ENCODE measurements at regions of chr20 and their contacts with region 1.

Region 1: DNA sequence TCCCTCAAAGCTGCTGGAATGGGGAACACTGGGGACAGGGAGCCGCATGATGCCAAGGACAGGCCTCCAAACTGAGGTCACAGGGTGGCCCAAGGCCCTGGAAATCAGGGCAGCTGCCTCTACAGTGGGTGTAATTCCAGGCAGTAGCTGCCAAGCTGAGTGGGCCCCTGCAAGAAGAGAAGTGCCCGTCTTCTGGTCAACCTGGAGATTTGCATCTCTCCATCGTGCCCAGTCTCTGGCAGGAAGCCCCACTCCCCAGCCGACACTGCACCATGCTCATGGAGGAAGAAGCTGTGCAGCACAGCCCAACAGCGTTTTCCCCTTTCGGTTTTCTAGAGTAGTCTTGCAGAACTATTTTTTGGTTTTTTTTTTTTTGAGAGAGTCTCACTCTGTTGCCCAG is 2.2 kb upstream of the FAM209A start:
- DNase-seq: no peak
- H3K4me3 ChIP-seq: no peak overlapping the region
- H3K27ac ChIP-seq: no peak overlapping the region
- H3K4me1 ChIP-seq: no peaks in the 10 kb centered on the region
- H3K27me3 ChIP-seq: no peaks in the 10 kb centered on the region
- CTCF ChIP-seq: no peak

Region 2: GRCh38 chr20:56428881-56429280 is 93.4 kb before region 1 on chr20:
- CTCF ChIA-PET with region 1: interaction called, 14 read pairs
- dilution Hi-C with region 1: no loop called
- in situ Hi-C with region 1: no loop called
- intact Hi-C with region 1: no loop called
- DNase-seq: no peak
- H3K4me3 ChIP-seq: no peak overlapping the region
- H3K27ac ChIP-seq: no peak overlapping the region
- H3K4me1 ChIP-seq: no peaks in the 10 kb centered on the region
- H3K27me3 ChIP-seq: no peaks in the 10 kb centered on the region
- CTCF ChIP-seq: no peak

Region 3: DNA sequence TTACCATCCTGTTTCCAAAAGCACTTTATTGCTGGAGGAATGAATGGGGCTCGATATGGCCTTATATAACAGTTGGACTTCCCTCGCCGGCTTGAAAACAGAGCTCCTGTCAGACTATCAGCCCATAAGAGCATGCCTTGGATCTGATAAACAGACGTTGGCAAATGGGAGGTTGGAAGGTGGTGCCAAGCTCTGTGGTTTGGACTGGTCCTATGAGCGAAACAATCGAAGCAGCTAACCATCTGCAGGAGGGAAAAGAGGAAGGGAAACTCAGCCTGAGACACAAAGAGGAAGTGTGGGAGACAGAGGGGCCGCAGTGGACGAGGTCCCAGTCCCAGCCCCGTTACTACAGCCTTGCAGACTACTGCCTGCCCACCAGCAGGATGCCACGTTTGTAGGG is 199.7 kb after region 1 on chr20:
- CTCF ChIA-PET with region 1: no interaction called
- dilution Hi-C with region 1: no loop called
- in situ Hi-C with region 1: no loop called
- intact Hi-C with region 1: no loop called
- DNase-seq: no peak
- H3K4me3 ChIP-seq: no peak overlapping the region
- H3K27ac ChIP-seq: no peak overlapping the region
- H3K4me1 ChIP-seq: no peaks in the 10 kb centered on the region
- H3K27me3 ChIP-seq: no peaks in the 10 kb centered on the region
- CTCF ChIP-seq: no peak

Region 4: GRCh38 chr20:56949318-56949717 is 427.0 kb after region 1 on chr20:
- CTCF ChIA-PET with region 1: no interaction called
- dilution Hi-C with region 1: no loop called
- in situ Hi-C with region 1: no loop called
- intact Hi-C with region 1: no loop called
- DNase-seq: no peak
- H3K4me3 ChIP-seq: no peak overlapping the region
- H3K27ac ChIP-seq: no peak overlapping the region
- H3K4me1 ChIP-seq: no peaks in the 10 kb centered on the region
- H3K27me3 ChIP-seq: no peaks in the 10 kb centered on the region
- CTCF ChIP-seq: no peak

Measured in mammary epithelial cell (primary cell).